ENCODE measurements at regions of chr7 and their contacts with region 1.

Region 1: GRCh38 chr7:16071246-16071857 is 350.0 kb downstream of the CRPPA start:
- DNase-seq: peak; percentile 70
- H3K4me3 ChIP-seq: no peak overlapping the region
- H3K27ac ChIP-seq: no peak overlapping the region
- H3K4me1 ChIP-seq: peaks cover 12% of the 10 kb centered on the region
- H3K27me3 ChIP-seq: no peaks in the 10 kb centered on the region
- CTCF ChIP-seq: peak; percentile 41 to 57
- POLR2A ChIP-seq: no peak

Region 2: GRCh38 chr7:14717816-14718215 is 1353.5 kb before region 1 on chr7:
- CTCF ChIA-PET with region 1: interaction called, 4 read pairs
- POLR2A ChIA-PET with region 1: no interaction called
- dilution Hi-C with region 1: no loop called
- intact Hi-C with region 1: loop called (anchors 5 kb)
- DNase-seq: peak; percentile 48
- H3K4me3 ChIP-seq: no peak overlapping the region
- H3K27ac ChIP-seq: no peak overlapping the region
- H3K4me1 ChIP-seq: peaks cover 7% of the 10 kb centered on the region
- H3K27me3 ChIP-seq: no peaks in the 10 kb centered on the region
- CTCF ChIP-seq: peak; percentile 21 to 30
- POLR2A ChIP-seq: no peak

Region 3: DNA sequence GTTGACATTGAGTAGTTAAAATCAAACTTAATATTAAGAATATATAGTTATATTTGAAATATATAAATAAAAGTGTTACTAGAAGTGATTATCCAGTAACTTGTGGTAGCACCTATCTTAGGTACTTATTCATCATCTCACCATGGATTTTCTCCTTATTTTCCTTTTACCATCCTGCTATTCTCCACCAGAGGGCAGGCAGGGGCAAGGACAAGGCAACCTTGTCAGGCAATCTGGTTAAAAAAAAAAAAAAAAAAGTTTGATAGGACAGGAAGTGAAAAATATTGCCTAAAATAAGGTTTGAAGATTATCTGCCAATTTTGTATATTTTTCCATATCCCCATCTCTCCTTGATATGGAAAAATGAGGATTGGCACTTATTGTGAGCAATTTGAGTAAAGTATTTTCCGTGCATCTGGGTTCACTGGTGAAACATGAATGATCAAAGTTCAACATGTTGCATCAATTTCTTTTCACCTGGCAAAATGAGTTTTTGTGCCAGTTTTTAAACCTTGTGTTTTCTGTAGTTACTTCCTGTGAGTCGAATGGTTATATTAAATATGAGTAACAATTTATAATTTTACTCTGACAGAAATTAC is 766.3 kb before region 1 on chr7:
- CTCF ChIA-PET with region 1: interaction called, 3 read pairs
- POLR2A ChIA-PET with region 1: no interaction called
- dilution Hi-C with region 1: no loop called
- intact Hi-C with region 1: loop called (anchors 1 kb)
- DNase-seq: peak; percentile 65
- H3K4me3 ChIP-seq: no peak overlapping the region
- H3K27ac ChIP-seq: no peak overlapping the region
- H3K4me1 ChIP-seq: no peaks in the 10 kb centered on the region
- H3K27me3 ChIP-seq: no peaks in the 10 kb centered on the region
- CTCF ChIP-seq: peak; percentile 61 to 66
- POLR2A ChIP-seq: no peak

Region 4: DNA sequence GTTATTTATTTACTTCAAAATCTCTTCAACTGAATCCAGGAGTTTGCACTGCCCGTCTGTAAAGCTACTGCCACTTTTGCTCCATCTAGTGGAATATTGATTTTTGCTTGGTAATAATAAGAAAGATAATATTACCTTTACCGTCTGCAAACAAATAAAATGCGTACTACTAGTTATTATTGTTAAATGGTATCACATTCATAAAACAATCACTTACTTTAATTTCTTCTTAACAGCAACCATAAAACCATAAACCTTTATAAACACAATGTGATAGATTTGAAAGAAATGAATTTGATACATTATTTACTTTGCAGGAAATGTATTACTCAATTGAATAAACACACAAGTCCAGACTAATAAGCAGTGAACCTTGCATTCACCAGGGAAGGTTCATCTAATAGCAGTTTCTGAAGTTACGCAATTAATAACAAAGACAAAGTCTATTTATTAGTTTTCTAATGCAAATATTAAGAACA is 515.9 kb before region 1 on chr7:
- CTCF ChIA-PET with region 1: no interaction called
- POLR2A ChIA-PET with region 1: no interaction called
- dilution Hi-C with region 1: no loop called
- intact Hi-C with region 1: loop called (anchors 5 kb)
- DNase-seq: peak; percentile 73
- H3K4me3 ChIP-seq: peak overlapping the region in 2 of 3 experiments; percentile 12 to 32
- H3K27ac ChIP-seq: peak overlapping the region; percentile 27
- H3K4me1 ChIP-seq: peaks cover 36% of the 10 kb centered on the region
- H3K27me3 ChIP-seq: no peaks in the 10 kb centered on the region
- CTCF ChIP-seq: peak in 1 of 2 donors; percentile 6
- POLR2A ChIP-seq: no peak

Region 5: GRCh38 chr7:15839416-15840100 is 231.8 kb before region 1 on chr7:
- CTCF ChIA-PET with region 1: interaction called, 3 read pairs
- POLR2A ChIA-PET with region 1: no interaction called
- dilution Hi-C with region 1: no loop called
- intact Hi-C with region 1: loop called (anchors 2 kb)
- DNase-seq: peak; percentile 78
- H3K4me3 ChIP-seq: peak overlapping the region in 2 of 3 experiments; percentile 2 to 37
- H3K27ac ChIP-seq: peak overlapping the region; percentile 42
- H3K4me1 ChIP-seq: peaks cover 14% of the 10 kb centered on the region
- H3K27me3 ChIP-seq: no peaks in the 10 kb centered on the region
- CTCF ChIP-seq: no peak
- POLR2A ChIP-seq: no peak

Region 6: DNA sequence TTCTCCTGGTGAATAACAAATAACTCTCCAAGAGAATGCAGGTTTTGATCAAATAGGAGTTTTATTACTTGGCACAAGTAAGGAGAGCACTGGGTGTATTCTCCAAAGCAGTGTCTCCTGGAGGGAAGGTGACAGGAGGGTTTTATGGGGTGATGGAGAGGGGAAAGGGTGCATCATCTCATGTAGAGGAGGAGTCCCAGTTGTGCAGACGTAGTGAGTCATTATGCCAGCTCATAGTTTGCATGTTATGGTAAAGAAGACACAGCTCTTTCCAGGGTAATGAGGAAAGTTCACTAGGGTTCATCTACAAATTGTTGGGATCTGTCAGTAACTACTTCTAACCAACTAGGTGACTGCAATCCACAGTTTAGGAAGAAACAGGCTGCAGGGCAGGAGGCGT is 37.0 kb before region 1 on chr7:
- CTCF ChIA-PET with region 1: no interaction called
- POLR2A ChIA-PET with region 1: no interaction called
- dilution Hi-C with region 1: no loop called
- intact Hi-C with region 1: no loop called
- DNase-seq: peak; percentile 4
- H3K4me3 ChIP-seq: no peak overlapping the region
- H3K27ac ChIP-seq: no peak overlapping the region
- H3K4me1 ChIP-seq: no peaks in the 10 kb centered on the region
- H3K27me3 ChIP-seq: no peaks in the 10 kb centered on the region
- CTCF ChIP-seq: no peak
- POLR2A ChIP-seq: no peak